AG04450 (cell line): ENCODE measurements at regions of chr7 and their contacts with region 1.

Region 1: GRCh38 chr7:29177963-29178600 is 16.5 kb upstream of the CHN2 start:
- DNase-seq: no peak
- H3K4me3 ChIP-seq: no peak overlapping the region
- H3K27ac ChIP-seq: no peak overlapping the region
- H3K27me3 ChIP-seq: no peaks in the 10 kb centered on the region
- CTCF ChIP-seq: no peak

Region 2: DNA sequence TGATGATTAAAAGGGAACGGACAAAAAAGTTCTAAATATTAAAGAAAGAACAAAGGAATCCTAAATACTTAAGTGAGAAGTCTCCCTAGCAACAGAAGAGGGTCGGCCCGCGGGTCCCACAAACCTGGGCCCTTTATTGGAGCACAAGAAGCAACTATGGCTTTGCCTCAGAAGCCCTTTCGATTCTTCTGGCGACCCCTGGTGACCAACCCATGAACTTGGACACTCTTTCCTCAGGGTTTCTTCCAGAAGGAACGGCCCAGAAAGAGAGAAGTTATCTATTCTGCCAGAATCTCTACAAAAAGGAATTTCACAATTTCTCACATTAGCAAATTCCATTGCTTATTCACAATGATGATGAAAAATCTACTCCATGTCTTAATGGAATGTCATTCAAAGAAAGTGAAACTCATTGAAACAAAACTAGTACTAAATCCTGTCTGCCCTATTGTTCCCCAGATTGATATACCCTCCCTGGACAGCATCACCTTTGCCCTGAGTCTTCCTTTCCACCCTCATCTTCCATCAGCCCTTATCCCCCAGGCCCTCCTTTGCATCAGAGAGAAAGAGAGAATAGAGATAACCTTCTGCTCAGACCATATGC is 75.4 kb before region 1 on chr7:
- CTCF ChIA-PET with region 1: no interaction called
- POLR2A ChIA-PET with region 1: no interaction called
- DNase-seq: peak; percentile 8
- H3K4me3 ChIP-seq: no peak overlapping the region
- H3K27ac ChIP-seq: no peak overlapping the region
- H3K27me3 ChIP-seq: peaks cover 5% of the 10 kb centered on the region
- CTCF ChIP-seq: peak; percentile 77

Region 3: DNA sequence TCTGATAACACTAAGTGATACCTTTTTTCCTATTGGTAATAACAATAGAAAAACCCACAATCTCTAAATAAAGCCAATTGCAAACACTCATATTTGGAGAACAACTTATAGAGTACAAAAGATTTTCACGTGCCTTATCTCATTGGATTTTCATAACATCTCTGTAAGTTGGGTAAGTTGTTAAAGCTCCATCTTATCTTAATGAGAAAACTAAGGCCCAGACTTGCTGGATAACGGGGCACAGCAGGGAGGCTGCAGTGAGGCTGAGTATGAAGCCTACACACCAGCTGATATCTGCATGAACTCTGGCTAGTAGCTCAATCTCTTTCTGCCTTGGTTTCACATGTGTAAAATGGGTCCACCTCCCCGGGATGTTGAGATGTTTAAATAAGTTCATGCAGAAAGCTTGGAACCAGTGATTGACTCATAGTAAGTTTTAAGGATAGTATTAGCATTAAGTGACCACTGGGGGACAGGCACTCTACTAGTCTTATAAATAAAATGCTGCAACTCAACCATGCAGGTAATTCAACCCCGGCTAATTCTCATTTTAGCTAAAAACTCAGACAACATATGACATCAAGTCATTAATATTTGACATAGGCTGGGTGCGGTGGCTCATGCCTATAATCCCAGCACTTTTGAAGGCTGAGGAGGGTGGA is 58.4 kb before region 1 on chr7:
- CTCF ChIA-PET with region 1: no interaction called
- POLR2A ChIA-PET with region 1: interaction called, 10 read pairs
- DNase-seq: no peak
- H3K4me3 ChIP-seq: no peak overlapping the region
- H3K27ac ChIP-seq: no peak overlapping the region
- H3K27me3 ChIP-seq: no peaks in the 10 kb centered on the region
- CTCF ChIP-seq: no peak

Region 4: GRCh38 chr7:29158795-29159423 is 19.2 kb before region 1 on chr7:
- CTCF ChIA-PET with region 1: no interaction called
- POLR2A ChIA-PET with region 1: no interaction called
- DNase-seq: no peak
- H3K4me3 ChIP-seq: no peak overlapping the region
- H3K27ac ChIP-seq: no peak overlapping the region
- H3K27me3 ChIP-seq: peaks cover 2% of the 10 kb centered on the region
- CTCF ChIP-seq: no peak